AG04450 (cell line): ENCODE measurements at regions of chr1 and their contacts with region 1.

Region 1: DNA sequence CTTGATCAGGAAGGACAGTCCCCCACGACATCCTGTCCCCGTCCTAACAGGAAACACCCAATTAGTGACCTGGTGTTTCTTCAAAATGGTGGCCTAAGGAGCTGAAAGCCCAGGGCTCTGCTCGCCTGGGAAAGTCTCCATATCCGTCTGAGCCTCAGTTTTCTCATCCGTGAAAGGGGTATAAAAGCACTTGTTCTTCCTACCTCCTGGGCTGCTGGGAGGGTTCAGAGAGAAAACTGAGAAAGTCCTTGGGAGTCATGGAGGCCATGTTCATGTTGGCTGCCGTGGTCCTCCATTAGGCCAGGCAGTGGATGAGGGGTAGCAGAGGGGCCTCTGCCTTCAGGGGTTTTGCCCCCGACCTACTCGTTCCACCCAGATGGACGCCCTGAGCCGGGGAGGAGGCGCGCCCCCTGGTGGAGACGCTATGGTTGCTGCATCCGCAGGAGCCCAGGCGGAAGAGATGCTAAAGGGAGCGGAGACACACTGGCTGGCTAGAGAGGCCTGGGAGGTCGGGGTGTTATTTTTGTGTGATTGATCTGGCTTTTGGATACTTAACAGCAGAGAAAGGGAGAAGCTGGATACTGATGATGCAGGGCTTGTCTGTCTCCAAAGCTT is 113.5 kb downstream of the PRDM2 start:
- DNase-seq: no peak
- H3K4me3 ChIP-seq: no peak overlapping the region
- H3K27ac ChIP-seq: no peak overlapping the region
- H3K27me3 ChIP-seq: no peaks in the 10 kb centered on the region
- CTCF ChIP-seq: peak; percentile 64

Region 2: DNA sequence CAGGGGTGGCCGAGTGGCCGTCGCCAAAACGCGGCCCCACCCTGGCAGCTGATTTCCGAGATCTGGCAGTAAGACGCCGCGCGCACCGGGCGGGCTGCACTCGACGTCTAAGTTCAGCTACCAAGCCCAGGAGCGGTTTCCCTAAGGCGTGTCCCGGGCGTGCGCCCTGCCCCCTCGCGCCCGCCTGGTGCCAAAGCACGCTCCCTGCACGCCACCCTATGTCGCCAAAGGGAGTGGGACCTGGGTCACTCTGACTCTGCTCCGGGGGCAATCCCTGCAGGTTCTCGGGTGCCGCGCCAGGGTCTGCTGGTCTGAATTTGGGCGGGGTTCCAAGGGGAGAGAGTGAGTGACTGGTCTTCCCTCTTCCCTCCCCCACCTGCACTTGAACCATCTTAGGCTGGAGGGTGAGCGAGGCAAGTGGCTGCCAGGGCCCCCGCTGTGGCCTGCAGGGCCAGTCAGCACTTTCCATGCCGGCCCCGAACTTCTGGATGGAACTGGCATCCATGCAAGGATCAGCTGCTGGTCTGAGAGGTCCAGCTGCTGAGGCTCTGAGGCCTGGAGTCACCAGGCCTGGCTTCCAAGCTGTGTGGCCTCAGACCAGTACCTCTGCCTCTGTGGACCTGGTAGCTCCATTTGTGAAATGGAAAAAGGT is 299.5 kb before region 1 on chr1 and contains the start of gene LRRC38:
- CTCF ChIA-PET with region 1: interaction called, 15 read pairs
- POLR2A ChIA-PET with region 1: no interaction called
- DNase-seq: no peak
- H3K4me3 ChIP-seq: no peak within 1 kb of the TSS
- H3K27ac ChIP-seq: no peak within 1 kb of the TSS
- H3K27me3 ChIP-seq: no peaks in the 10 kb centered on the region
- CTCF ChIP-seq: no peak
- polyA plus RNA-seq, gene LRRC38: not detected in 2 replicates

Region 3: DNA sequence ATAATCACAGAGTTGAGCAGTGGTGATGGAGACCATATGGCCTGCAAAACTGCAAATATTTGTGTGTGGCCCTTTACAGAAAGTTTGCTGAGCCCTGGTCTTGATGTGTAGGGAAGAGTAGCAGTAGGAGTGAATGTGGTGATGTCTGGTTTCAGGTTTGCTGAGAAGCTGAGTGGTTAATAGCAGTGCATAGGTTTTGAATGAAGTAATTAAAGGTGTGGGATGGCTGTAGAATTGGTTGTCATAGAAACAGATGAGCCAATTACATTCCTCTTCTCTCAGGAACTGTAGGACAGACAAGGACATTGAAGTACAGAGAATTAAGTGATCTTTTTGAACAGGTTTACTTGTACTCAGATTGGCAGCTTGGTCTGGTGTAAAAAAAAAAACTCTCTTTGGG is 76.1 kb before region 1 on chr1:
- CTCF ChIA-PET with region 1: no interaction called
- POLR2A ChIA-PET with region 1: no interaction called
- DNase-seq: no peak
- H3K4me3 ChIP-seq: no peak overlapping the region
- H3K27ac ChIP-seq: no peak overlapping the region
- H3K27me3 ChIP-seq: no peaks in the 10 kb centered on the region
- CTCF ChIP-seq: no peak

Region 4: GRCh38 chr1:13764588-13765332 is 48.7 kb before region 1 on chr1:
- CTCF ChIA-PET with region 1: no interaction called
- POLR2A ChIA-PET with region 1: no interaction called
- DNase-seq: no peak
- H3K4me3 ChIP-seq: peak overlapping the region; percentile 14; the same call in 1 of the 2 replicates
- H3K27ac ChIP-seq: no peak overlapping the region
- H3K27me3 ChIP-seq: no peaks in the 10 kb centered on the region
- CTCF ChIP-seq: peak; percentile 23; the same call in 1 of the 2 replicates

Region 5: DNA sequence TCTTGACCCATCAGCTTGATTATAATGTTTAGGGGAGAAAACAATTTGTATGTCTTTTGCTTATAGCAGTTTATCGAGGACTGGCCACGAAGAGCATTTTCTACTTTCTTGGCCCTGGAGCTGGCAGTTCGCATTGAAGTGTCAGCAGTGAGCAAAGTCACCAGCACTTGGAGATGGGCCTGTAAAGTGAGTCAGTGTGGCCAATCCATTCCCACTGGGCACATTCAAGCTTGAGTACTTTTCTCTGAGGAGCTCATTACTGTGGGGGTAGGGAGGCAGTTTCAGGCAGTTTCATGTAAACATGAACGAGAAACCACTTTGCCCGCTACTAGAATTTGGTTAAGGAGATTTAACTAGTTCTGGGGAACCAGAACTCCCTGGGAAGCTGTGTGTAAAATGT is 51.3 kb after region 1 on chr1:
- CTCF ChIA-PET with region 1: no interaction called
- POLR2A ChIA-PET with region 1: no interaction called
- DNase-seq: no peak
- H3K4me3 ChIP-seq: no peak overlapping the region
- H3K27ac ChIP-seq: no peak overlapping the region
- H3K27me3 ChIP-seq: no peaks in the 10 kb centered on the region
- CTCF ChIP-seq: no peak